ENCODE measurements at regions of chr11 and their contacts with region 1.

Region 1: DNA sequence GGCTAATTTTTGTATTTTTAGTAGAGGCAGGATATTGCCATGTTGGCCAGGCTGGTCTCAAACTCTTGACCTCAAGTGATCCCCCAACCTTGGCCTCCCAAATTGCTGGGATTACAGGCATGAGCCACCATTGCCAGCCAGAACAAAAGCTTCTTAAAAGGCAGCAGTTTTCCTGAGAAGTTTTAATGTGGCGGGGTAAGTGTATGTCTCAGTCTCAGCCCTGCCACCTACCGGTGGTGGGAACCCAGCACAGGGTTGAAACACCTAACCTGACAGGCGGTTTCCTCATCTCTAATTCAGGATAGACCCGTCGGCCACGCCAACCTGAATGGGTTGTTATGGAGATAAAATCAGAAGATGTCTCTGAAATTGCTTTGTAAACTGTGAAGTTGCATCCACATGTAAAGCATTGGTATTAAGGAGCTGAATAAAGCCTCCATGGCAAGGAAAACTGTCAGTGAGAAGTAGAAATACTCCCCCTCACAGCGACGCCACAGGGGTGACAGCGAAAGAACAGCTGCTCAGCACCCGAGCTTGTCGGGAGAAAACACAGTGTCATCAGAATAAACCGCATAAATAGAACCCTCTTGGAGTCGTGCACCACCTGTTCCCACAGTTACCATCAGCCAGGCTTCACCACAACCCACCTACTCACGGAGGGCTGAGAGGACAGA is 165.9 kb upstream of the NCAM1 start:
- DNase-seq: peak in 2 of 9 donors; percentile 11 to 14
- ATAC-seq: no peak
- H3K4me3 ChIP-seq: no peak overlapping the region
- H3K4me3 Mint-ChIP-seq: no peak overlapping the region
- H3K27ac ChIP-seq: no peak overlapping the region
- H3K27ac Mint-ChIP-seq: no peak overlapping the region
- H3K4me1 ChIP-seq: no peaks in the 10 kb centered on the region
- H3K4me1 Mint-ChIP-seq: peaks cover 0 to 12% (median 4%) of the 10 kb centered on the region in 7 donors
- H3K27me3 ChIP-seq: no peaks in the 10 kb centered on the region
- H3K27me3 Mint-ChIP-seq: peaks cover 6 to 20% (median 13%) of the 10 kb centered on the region in 5 donors

Region 2: GRCh38 chr11:111663820-111664219 is 1131.5 kb before region 1 on chr11:
- CTCF ChIA-PET with region 1: no interaction called
- POLR2A ChIA-PET with region 1: no interaction called
- intact Hi-C with region 1: no loop called
- DNase-seq: no peak
- ATAC-seq: no peak
- H3K4me3 ChIP-seq: no peak overlapping the region
- H3K4me3 Mint-ChIP-seq: no peak overlapping the region
- H3K27ac ChIP-seq: no peak overlapping the region
- H3K27ac Mint-ChIP-seq: no peak overlapping the region
- H3K4me1 ChIP-seq: no peaks in the 10 kb centered on the region
- H3K4me1 Mint-ChIP-seq: peaks cover 0 to 7% (median 0%) of the 10 kb centered on the region in 7 donors
- H3K27me3 ChIP-seq: no peaks in the 10 kb centered on the region
- H3K27me3 Mint-ChIP-seq: no peaks in the 10 kb centered on the region

Region 3: DNA sequence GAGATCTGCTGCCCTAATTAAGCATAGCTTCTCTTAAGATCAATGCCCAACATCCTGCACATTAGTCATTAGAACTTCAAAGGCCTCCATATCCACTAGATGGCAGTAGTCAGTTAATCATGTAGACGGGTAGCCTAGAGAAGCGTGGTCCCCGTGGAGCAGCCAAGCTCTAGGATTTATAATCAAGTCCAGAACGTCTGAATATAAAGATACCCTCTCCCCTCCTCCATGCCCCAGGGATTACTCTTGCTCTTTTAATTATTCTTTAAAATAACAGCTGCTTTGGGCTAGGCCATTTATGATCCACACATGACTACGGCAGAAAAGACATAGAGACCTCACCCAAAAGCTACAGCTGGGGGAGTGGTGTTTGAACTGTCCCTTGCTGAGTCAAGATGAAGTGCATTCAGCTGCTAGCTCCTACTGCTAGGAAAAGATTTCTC is 207.0 kb before region 1 on chr11:
- CTCF ChIA-PET with region 1: interaction called, 4 read pairs
- POLR2A ChIA-PET with region 1: no interaction called
- intact Hi-C with region 1: loop called (anchors 2 to 5 kb)
- DNase-seq: peak in 7 of 9 donors; percentile 21 to 53 (median 48)
- ATAC-seq: peak; percentile 78
- H3K4me3 ChIP-seq: no peak overlapping the region
- H3K4me3 Mint-ChIP-seq: peak overlapping the region in 4 of 10 donors; percentile 11 to 71 (median 46)
- H3K27ac ChIP-seq: no peak overlapping the region
- H3K27ac Mint-ChIP-seq: no peak overlapping the region
- H3K4me1 ChIP-seq: no peaks in the 10 kb centered on the region
- H3K4me1 Mint-ChIP-seq: peaks cover 0 to 6% (median 0%) of the 10 kb centered on the region in 7 donors
- H3K27me3 ChIP-seq: no peaks in the 10 kb centered on the region
- H3K27me3 Mint-ChIP-seq: peaks cover 0 to 5% (median 3%) of the 10 kb centered on the region in 5 donors

Region 4: DNA sequence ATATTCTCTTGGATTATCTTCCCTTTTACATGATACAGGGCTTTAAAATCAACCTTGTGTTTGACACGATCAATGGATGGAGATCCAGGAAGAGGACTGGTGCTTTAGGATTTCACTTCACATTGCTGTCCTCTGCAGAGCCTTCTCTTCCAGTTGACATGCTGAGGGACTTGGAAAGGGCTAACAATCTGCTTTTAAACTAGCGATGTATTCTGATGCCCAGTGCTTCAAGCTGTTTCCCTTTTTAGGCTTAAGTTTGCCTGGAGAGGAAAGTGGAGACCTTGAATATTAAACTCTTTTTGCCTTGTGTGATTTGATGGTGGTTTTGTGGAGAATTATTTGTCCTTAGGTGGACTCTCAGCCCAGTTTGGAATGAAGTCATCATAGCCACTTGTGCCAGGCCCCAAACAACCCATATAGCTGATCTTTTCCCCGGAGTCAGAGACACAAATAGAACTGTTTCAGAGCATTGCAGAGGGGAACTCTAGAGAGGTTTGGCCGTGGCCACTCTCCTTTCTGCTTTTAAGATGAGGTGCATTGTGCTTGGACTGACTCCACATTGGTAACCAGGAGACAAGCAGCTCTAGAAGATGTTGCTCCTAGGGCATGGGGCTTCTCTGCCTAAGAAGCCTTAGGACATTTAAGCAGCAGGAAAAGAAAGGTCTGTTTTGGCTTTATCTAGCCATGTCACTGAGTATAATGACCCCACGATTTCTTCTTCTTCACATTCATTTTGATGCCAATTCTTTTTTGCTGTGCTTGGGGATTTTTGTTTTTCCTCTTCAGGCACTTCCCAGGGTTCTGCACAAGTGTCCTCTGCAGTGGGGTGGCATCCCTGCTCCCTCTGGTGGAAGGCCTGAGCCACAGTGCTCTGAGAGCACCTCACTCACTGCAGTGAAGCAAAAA is 318.8 kb after region 1 on chr11:
- CTCF ChIA-PET with region 1: no interaction called
- POLR2A ChIA-PET with region 1: no interaction called
- intact Hi-C with region 1: loop called in 1 of 2 experiments (anchors 1 kb)
- DNase-seq: no peak
- ATAC-seq: peak; percentile 62
- H3K4me3 ChIP-seq: no peak overlapping the region
- H3K4me3 Mint-ChIP-seq: no peak overlapping the region
- H3K27ac ChIP-seq: no peak overlapping the region
- H3K27ac Mint-ChIP-seq: no peak overlapping the region
- H3K4me1 ChIP-seq: no peaks in the 10 kb centered on the region
- H3K4me1 Mint-ChIP-seq: no peaks in the 10 kb centered on the region
- H3K27me3 ChIP-seq: peaks cover 0 to 5% of the 10 kb centered on the region in 2 donors
- H3K27me3 Mint-ChIP-seq: peaks cover 9 to 32% (median 21%) of the 10 kb centered on the region in 5 donors

Region 5: GRCh38 chr11:113289431-113290187 is 494.3 kb after region 1 on chr11:
- CTCF ChIA-PET with region 1: no interaction called
- POLR2A ChIA-PET with region 1: no interaction called
- intact Hi-C with region 1: loop called in 1 of 2 experiments (anchors 1 kb)
- DNase-seq: peak; percentile 22 to 69 (median 51)
- ATAC-seq: peak; percentile 90
- H3K4me3 ChIP-seq: no peak overlapping the region
- H3K4me3 Mint-ChIP-seq: no peak overlapping the region
- H3K27ac ChIP-seq: no peak overlapping the region
- H3K27ac Mint-ChIP-seq: no peak overlapping the region
- H3K4me1 ChIP-seq: no peaks in the 10 kb centered on the region
- H3K4me1 Mint-ChIP-seq: no peaks in the 10 kb centered on the region
- H3K27me3 ChIP-seq: no peaks in the 10 kb centered on the region
- H3K27me3 Mint-ChIP-seq: peaks cover 0 to 12% (median 8%) of the 10 kb centered on the region in 5 donors